Posterior cingulate gyrus (tissue), 11 donors: ENCODE measurements at regions of chr9 and their contacts with region 1.

Region 1: DNA sequence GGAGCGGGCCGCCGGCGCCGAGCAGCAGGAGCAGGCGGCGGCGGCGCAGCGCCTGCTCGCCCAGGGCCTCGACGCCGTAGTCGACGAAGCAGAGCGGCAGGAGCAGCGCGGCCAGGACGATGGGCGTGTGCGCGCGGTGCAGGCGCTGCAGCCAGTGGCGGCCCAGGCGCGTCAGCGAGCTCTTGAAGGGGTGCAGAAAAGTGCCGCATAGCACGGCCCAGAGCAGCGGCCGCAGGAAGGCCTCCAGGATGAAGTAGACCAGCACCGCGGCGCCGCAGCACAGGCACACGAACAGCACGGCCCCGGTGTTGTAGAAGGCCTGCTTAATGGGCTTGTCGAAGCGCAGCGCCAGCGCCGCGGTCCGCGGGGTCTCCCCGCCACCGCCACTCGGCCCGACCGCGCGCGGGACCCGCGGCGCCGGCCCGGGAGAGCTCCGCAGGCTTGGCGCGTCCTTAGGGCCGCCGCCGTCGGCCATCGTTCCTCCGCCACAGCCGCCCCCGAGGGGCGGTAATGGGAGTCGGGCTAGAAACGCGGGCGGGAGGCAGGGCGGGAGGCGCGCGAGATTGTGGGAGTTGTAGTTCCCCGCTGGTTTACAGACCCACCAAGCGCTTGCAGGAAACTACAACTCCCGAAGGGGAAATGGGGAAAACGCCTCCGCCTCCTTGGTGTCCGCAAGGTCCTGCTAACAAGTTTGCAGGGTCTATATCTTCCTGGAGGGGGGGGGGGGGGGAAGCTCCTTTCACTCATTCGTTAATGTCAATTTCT is at the start of gene TMEM245:
- DNase-seq: peak; percentile 92 to 100 (median 96)

Region 2: DNA sequence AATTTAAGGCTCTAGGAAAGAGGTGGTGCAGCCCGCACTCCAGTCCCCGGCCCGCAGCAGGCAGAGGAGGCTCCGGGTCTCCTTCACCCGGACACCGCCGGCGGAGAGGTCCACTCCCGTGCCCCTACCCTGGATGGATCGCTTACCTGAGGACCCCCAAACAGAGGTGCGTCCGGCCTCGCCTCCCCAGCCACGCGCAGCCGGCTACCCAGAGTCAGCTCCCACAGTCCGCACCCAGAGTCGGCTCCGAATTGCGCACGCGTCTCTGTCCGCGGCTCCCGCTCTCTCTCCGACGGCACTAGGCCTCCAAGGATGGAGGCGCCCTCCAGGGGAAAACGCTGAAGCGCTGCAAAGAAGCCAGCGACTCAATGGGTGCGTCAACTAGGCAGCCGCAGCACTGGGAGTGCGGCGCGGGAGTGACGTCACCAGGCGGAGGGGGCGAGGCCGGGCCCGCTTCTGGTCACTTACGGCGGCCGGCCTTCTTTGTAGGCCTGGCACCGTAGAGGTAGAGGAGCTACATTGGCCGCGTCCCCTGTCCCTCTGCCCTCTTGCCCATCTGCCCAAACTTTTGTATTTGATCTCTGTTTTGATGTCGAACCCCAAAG is 185.8 kb before region 1 on chr9 and contains the start of gene ELP1:
- intact Hi-C with region 1: loop called (anchors 1 kb)
- DNase-seq: peak; percentile 88 to 99 (median 94)

Region 3: GRCh38 chr9:109012876-109013678 is 106.5 kb before region 1 on chr9 and contains the start of gene CTNNAL1:
- intact Hi-C with region 1: loop called (anchors 5 kb)
- DNase-seq: peak; percentile 80 to 98 (median 88)

Region 4: GRCh38 chr9:109052416-109052815 is 67.2 kb before region 1 on chr9:
- intact Hi-C with region 1: no loop called
- DNase-seq: no peak

Region 5: DNA sequence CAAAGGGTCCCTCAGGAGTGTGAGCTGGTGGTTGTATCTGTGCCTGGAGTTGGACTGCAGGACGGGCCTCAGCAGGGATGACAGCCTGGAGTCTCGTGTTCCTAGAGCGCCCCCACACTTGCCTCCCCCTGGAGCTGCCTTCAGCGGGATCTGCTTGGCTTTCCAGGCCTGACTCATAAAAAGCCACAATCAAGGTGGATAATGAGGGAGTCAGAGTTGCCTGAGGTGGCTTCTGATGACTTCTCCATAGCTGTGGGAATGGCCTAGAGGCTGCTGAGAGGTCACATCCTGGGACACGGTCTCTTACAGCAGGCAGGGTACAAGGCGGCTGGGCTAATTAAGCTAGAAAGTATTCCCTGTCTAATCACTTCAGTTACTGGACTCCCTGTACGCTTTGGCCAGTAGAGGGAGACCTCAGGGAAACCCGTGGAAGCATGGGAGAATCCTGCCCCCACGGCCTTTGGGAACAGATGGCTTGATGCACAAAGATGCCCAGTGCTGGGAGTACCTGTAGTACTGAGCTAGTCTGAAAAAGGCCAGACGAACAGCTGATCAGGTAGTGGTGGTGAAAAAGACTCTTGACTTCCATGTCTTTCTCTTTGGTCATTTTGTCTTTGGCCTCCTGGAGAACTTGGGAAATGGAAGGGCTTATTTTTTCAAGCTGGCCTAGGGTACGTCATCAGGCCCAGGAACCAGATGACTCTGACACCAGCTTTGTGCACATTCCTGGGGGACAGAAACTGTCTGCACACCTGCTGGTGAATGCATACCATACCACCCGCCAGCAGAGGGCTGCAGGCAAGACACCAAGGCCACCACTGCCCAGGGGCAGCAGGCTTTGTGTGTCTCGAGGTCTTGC is 63.5 kb after region 1 on chr9:
- intact Hi-C with region 1: no loop called
- DNase-seq: peak in 3 of 10 donors; percentile 18 to 30 (median 20)